SK-N-SH (cell line): ENCODE measurements at regions of chr21 and their contacts with region 1.

Region 1: GRCh38 chr21:44480200-44481053 is 25.1 kb downstream of the LRRC3 start:
- DNase-seq: no peak
- H3K4me3 ChIP-seq: no peak overlapping the region
- H3K27ac ChIP-seq: no peak overlapping the region
- H3K4me1 ChIP-seq: no peaks in the 10 kb centered on the region
- H3K27me3 ChIP-seq: peaks cover 9% of the 10 kb centered on the region; the same call in 1 of the 2 replicates
- CTCF ChIP-seq: no peak
- EP300 ChIP-seq: no peak
- RAD21 ChIP-seq: no peak

Region 2: GRCh38 chr21:44255519-44255981 is 224.9 kb before region 1 on chr21:
- CTCF ChIA-PET with region 1: no interaction called
- POLR2A ChIA-PET with region 1: no interaction called
- DNase-seq: no peak
- H3K4me3 ChIP-seq: no peak overlapping the region
- H3K27ac ChIP-seq: no peak overlapping the region
- H3K4me1 ChIP-seq: no peaks in the 10 kb centered on the region
- H3K27me3 ChIP-seq: no peaks in the 10 kb centered on the region
- CTCF ChIP-seq: no peak
- EP300 ChIP-seq: no peak
- RAD21 ChIP-seq: no peak

Region 3: GRCh38 chr21:44338971-44339910 is 141.2 kb before region 1 on chr21 and contains the start of gene CFAP410:
- CTCF ChIA-PET with region 1: interaction called, 10 read pairs
- POLR2A ChIA-PET with region 1: no interaction called
- DNase-seq: peak; percentile 98
- H3K4me3 ChIP-seq: peak within 1 kb of the TSS; percentile 72 to 76
- H3K27ac ChIP-seq: peak within 1 kb of the TSS; percentile 86 to 96
- H3K4me1 ChIP-seq: peaks cover 6 to 10% of the 10 kb centered on the region in 2 experiments; a peak in 2 of 4 replicates
- H3K27me3 ChIP-seq: no peaks in the 10 kb centered on the region
- CTCF ChIP-seq: no peak
- EP300 ChIP-seq: no peak
- RAD21 ChIP-seq: no peak
- polyA plus RNA-seq, gene CFAP410: 18.0 and 19.2 TPM in 2 replicates

Region 4: GRCh38 chr21:44360159-44360558 is 120.3 kb before region 1 on chr21:
- CTCF ChIA-PET with region 1: no interaction called
- POLR2A ChIA-PET with region 1: no interaction called
- DNase-seq: no peak
- H3K4me3 ChIP-seq: no peak overlapping the region
- H3K27ac ChIP-seq: no peak overlapping the region
- H3K4me1 ChIP-seq: no peaks in the 10 kb centered on the region
- H3K27me3 ChIP-seq: peaks cover 28% of the 10 kb centered on the region
- CTCF ChIP-seq: peak; percentile 11; the same call in 1 of the 2 replicates
- EP300 ChIP-seq: no peak
- RAD21 ChIP-seq: no peak

Region 5: DNA sequence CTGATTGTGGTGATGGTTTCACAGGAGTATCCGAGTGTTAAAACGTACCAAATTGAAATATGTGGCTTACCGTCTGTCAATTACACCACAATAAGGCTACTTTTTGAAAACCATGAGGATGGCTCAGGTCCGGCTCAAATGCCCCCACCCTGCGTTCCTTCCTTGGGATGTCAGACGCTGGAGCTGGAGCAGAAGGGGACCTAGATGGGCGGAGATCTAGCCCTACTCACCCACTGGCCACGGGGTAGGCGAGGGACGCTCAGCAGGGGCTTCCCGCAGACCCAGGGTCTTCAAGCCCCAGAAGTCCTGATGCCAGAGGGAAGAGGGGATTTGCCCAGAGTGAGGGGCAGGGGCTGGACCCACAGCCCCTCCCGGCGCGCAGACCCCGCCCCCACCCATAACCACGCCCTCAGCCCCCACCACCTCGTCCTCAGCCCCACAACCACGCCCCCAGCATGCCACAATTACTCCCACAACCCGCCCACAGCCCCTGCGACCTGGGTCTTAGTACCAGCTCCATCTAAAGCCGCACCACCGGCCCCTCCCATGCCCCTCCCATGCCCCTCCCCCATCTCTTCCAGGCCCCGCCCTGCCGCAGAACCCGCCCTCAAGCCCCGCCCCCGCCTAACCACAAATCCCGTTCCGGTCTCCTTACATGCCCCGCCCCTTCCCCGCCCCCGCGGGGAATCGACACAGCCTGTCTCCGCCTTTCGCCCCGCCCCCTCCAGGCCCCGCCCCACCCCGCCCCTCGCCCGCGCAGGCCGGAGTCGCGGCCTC is 25.5 kb before region 1 on chr21 and contains the start of gene LRRC3:
- CTCF ChIA-PET with region 1: interaction called, 12 read pairs
- POLR2A ChIA-PET with region 1: interaction called, 3 read pairs
- DNase-seq: peak; percentile 100
- H3K4me3 ChIP-seq: peak within 1 kb of the TSS; percentile 55 to 75
- H3K27ac ChIP-seq: peak within 1 kb of the TSS in 1 of 2 experiments; percentile 25; a peak in 1 of 4 replicates
- H3K4me1 ChIP-seq: peaks cover 0 to 21% of the 10 kb centered on the region in 2 experiments; a peak in 1 of 4 replicates
- H3K27me3 ChIP-seq: peaks cover 5% of the 10 kb centered on the region; the same call in 1 of the 2 replicates
- CTCF ChIP-seq: no peak
- EP300 ChIP-seq: no peak
- RAD21 ChIP-seq: no peak
- polyA plus RNA-seq, gene LRRC3: 1.9 and 2.3 TPM in 2 replicates